SK-N-SH (cell line): ENCODE measurements at regions of chr17 and their contacts with region 1.

Region 1: GRCh38 chr17:69567130-69567529 is 152.6 kb downstream of the MAP2K6 start:
- DNase-seq: no peak
- H3K4me3 ChIP-seq: no peak overlapping the region
- H3K27ac ChIP-seq: no peak overlapping the region
- H3K4me1 ChIP-seq: peaks cover 0 to 3% of the 10 kb centered on the region in 2 experiments; a peak in 1 of 4 replicates
- H3K27me3 ChIP-seq: no peaks in the 10 kb centered on the region
- CTCF ChIP-seq: no peak
- EP300 ChIP-seq: no peak
- RAD21 ChIP-seq: no peak

Region 2: GRCh38 chr17:69506489-69506888 is 60.6 kb before region 1 on chr17:
- CTCF ChIA-PET with region 1: no interaction called
- POLR2A ChIA-PET with region 1: no interaction called
- DNase-seq: no peak
- H3K4me3 ChIP-seq: no peak overlapping the region
- H3K27ac ChIP-seq: no peak overlapping the region
- H3K4me1 ChIP-seq: peaks cover 3 to 5% of the 10 kb centered on the region in 2 experiments; a peak in 2 of 4 replicates
- H3K27me3 ChIP-seq: no peaks in the 10 kb centered on the region
- CTCF ChIP-seq: peak; percentile 52
- EP300 ChIP-seq: no peak
- RAD21 ChIP-seq: no peak

Region 3: DNA sequence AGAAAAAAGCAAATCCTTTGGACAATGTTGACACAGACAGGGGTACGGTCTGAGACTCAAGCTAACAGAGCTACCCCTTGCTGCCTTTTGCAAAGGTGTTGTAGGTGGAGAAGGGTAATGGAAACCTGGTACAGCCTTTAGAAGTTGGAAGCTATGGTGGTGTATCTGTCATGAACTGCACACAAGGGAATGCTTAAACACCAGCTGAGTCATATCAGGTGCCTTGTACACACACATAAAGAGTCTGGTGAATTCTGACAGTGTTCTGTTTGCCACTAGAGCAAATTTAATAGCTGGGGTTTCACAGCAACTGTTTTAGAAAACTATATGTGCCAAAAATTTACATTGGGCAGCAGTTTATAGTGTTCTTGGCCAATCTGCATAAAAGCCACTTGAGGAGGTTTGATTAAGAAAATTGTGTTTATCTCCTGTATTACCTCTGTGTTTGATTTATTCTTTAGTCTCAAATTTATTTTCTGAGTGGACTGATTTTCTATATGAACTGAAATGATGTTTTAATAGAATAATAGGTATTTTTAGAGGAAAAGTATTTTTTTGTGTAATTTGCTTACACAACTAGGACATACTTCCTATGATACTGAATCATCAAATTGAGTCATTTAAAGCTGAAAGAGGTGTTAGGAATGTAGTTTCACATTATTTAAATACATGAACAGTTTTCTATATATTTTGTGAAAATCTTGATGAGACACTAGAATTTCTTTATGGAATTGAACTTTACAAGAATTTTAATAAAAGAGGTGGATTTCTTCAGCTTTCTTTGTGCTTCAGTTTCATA is 15.7 kb before region 1 on chr17:
- CTCF ChIA-PET with region 1: interaction called, 13 read pairs
- POLR2A ChIA-PET with region 1: no interaction called
- DNase-seq: no peak
- H3K4me3 ChIP-seq: no peak overlapping the region
- H3K27ac ChIP-seq: no peak overlapping the region
- H3K4me1 ChIP-seq: no peaks in the 10 kb centered on the region
- H3K27me3 ChIP-seq: no peaks in the 10 kb centered on the region
- CTCF ChIP-seq: no peak
- EP300 ChIP-seq: no peak
- RAD21 ChIP-seq: no peak

Region 4: DNA sequence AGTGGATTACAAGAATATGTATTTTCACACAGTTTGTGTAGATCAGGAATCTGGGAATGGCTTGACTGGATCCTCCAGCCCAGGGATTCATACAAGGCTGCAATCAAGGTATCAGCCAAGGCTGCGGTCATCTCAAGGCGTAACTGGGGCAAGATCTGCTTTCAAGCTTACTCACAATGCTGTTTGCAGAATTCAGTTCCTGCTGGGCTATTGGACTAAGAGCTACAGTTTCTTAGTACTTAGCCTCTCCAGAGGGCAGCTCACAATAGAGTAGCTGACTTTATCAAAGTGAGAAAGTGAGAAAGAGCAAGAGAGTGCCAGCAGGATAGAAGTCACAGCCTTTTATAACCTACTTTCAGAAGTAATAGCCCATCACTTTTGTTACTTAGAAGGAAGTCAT is 58.3 kb after region 1 on chr17:
- CTCF ChIA-PET with region 1: no interaction called
- POLR2A ChIA-PET with region 1: no interaction called
- DNase-seq: no peak
- H3K4me3 ChIP-seq: no peak overlapping the region
- H3K27ac ChIP-seq: no peak overlapping the region
- H3K4me1 ChIP-seq: no peaks in the 10 kb centered on the region
- H3K27me3 ChIP-seq: no peaks in the 10 kb centered on the region
- CTCF ChIP-seq: no peak
- EP300 ChIP-seq: no peak
- RAD21 ChIP-seq: no peak

Region 5: DNA sequence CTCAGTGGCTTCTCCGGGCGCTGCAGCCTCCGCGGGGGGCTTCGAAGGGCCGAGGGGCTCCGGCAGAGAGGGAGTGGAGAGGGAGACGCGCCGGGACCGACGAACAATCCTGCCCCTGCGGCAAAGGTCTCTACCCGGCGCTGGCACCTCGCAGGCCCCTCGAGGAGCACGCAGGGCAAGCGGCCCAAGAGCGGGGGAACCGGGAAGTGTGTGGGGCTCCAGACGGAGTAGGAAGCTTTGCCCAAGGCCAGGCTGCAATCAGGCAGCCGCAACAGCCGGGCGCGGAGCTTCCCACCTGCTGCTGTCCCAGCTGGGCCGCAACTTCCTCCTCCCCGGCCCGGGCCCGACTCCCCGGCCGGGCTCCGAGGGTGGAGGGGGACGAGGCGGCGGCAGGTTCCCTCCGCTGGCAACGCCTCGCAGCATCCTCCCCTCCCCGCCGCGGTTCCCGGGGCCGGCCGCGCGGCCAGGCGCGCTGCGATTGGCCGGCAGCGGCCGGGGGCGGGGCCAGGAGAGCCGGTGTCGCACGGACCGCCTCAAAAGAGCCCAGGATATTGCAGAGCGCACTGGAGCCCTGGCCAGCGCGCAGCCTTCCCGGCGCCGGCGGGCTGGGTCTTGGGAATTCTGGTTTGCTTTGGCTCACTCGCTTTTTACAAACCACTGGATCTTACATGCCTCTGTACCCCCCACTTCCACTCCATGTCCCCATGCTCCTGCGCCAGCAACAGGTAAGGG is 602.0 kb after region 1 on chr17 and contains the start of gene KCNJ2:
- CTCF ChIA-PET with region 1: interaction called, 20 read pairs
- POLR2A ChIA-PET with region 1: no interaction called
- DNase-seq: peak; percentile 97
- H3K4me3 ChIP-seq: peak within 1 kb of the TSS; percentile 85 to 86
- H3K27ac ChIP-seq: peak within 1 kb of the TSS; percentile 46 to 78
- H3K4me1 ChIP-seq: peaks cover 3 to 33% of the 10 kb centered on the region in 2 experiments; a peak in 3 of 4 replicates
- H3K27me3 ChIP-seq: no peaks in the 10 kb centered on the region
- CTCF ChIP-seq: no peak
- EP300 ChIP-seq: peak; percentile 17 to 42; a peak in 2 of 4 replicates
- RAD21 ChIP-seq: peak; percentile 9; the same call in 1 of the 2 replicates
- polyA plus RNA-seq, gene KCNJ2: 0.18 and 0.21 TPM in 2 replicates

Region 6: GRCh38 chr17:70629902-70630301 is 1062.8 kb after region 1 on chr17:
- CTCF ChIA-PET with region 1: interaction called, 47 read pairs
- POLR2A ChIA-PET with region 1: no interaction called
- DNase-seq: peak; percentile 43
- H3K4me3 ChIP-seq: no peak overlapping the region
- H3K27ac ChIP-seq: no peak overlapping the region
- H3K4me1 ChIP-seq: no peaks in the 10 kb centered on the region
- H3K27me3 ChIP-seq: peaks cover 6% of the 10 kb centered on the region; the same call in 1 of the 2 replicates
- CTCF ChIP-seq: peak; percentile 56
- EP300 ChIP-seq: no peak
- RAD21 ChIP-seq: peak; percentile 84